ENCODE measurements at regions of chr1 and their contacts with region 1.

Region 1: DNA sequence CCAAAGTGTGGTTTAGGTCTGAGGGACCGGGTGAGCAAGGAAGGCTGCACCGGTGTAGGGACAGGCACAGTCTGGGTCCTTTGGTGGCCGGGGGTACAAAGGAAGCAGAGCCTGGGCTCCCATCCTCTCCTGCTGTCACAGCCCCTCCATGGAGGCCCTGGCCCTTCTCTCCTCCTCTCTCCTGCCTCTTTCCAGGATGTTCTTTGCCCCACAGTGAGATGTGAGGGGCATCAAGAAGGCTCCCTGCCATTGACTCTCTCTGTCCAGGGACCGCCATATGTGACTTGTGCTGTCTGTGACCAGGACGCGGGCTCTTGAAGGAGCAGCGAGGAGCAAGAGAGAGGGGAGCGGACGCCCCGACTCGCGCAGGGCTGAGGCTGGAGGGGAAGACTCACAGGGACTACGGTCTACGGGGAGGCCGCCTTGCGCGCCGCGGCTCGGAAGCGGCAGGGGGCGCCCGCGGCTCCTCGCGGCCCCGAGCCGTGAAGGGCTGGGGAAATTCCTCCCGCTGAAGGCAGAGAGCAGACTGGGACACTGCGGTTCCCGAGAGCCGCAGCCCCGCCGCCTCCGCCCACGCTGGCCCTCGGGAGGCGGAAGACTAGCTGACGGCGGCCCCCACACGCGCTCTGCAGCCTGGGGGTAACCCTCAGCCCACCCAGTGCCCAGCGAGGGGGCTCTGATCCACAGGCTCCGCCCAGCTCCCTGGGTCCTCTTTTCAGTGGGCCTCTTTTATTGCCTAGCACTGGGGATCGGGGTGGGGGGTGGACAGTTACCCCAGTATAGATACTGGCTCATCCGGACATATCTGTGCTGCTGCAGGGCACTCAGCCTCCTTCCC is 40.8 kb downstream of the MAB21L3 start:
- DNase-seq: no peak
- ATAC-seq: peak; percentile 72
- H3K4me3 ChIP-seq: peak overlapping the region; percentile 44 to 69 (median 54); a peak in 5 of 6 replicates
- H3K27ac ChIP-seq: peak overlapping the region; percentile 87
- H3K4me1 ChIP-seq: peaks cover 58% of the 10 kb centered on the region
- H3K27me3 ChIP-seq: peaks cover 0 to 2% of the 10 kb centered on the region in 2 experiments; a peak in 1 of 5 replicates
- CTCF ChIP-seq: peak; percentile 81
- EP300 ChIP-seq: no peak
- POLR2A ChIP-seq: 0 out of 4 replicates have a peak, but pooled peaks of 1 of the 2 experiments have one; percentile 20
- RAD21 ChIP-seq: peak; percentile 90

Region 2: DNA sequence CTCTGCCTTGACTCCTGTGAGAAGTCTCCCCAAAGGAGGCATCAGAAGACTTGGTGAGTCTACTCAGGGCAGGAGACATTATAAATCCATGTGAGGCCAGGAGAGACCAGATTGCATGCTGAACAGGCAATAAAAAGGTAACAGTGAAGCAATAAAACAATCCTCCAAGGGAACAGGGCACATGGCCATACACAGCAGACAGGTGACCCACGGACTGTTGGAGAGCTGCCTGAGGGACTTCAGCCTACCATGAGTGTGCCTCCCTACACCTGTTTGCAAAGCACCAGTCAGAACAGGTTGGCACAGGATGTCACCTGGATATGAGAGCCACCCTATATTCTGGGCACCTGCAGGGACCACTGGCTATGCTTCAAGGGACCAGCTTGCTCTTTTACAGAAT is 26.9 kb after region 1 on chr1:
- CTCF ChIA-PET with region 1: no interaction called
- POLR2A ChIA-PET with region 1: interaction called, 7 read pairs
- in situ Hi-C with region 1: no loop called
- intact Hi-C with region 1: loop called (anchors 1 kb)
- DNase-seq: no peak
- ATAC-seq: peak; percentile 31
- H3K4me3 ChIP-seq: no peak overlapping the region
- H3K27ac ChIP-seq: peak overlapping the region; percentile 57
- H3K4me1 ChIP-seq: peaks cover 93% of the 10 kb centered on the region
- H3K27me3 ChIP-seq: no peaks in the 10 kb centered on the region
- CTCF ChIP-seq: no peak
- EP300 ChIP-seq: no peak
- POLR2A ChIP-seq: no peak
- RAD21 ChIP-seq: no peak

Region 3: GRCh38 chr1:116268204-116268603 is 116.2 kb after region 1 on chr1:
- CTCF ChIA-PET with region 1: no interaction called
- POLR2A ChIA-PET with region 1: no interaction called
- in situ Hi-C with region 1: loop called (anchors 25 kb)
- intact Hi-C with region 1: no loop called
- DNase-seq: no peak
- ATAC-seq: no peak
- H3K4me3 ChIP-seq: no peak overlapping the region
- H3K27ac ChIP-seq: no peak overlapping the region
- H3K4me1 ChIP-seq: peaks cover 10% of the 10 kb centered on the region
- H3K27me3 ChIP-seq: 0 out of 5 replicates have a peak, but pooled peaks cover 0 to 9% of the 10 kb centered on the region in 2 experiments
- CTCF ChIP-seq: no peak
- EP300 ChIP-seq: no peak
- POLR2A ChIP-seq: no peak
- RAD21 ChIP-seq: no peak

Region 4: GRCh38 chr1:116377541-116378529 is 225.9 kb after region 1 on chr1:
- CTCF ChIA-PET with region 1: no interaction called
- POLR2A ChIA-PET with region 1: interaction called, 4 read pairs
- in situ Hi-C with region 1: loop called (anchors 5 kb)
- intact Hi-C with region 1: loop called (anchors 5 kb)
- DNase-seq: peak; percentile 79
- ATAC-seq: peak; percentile 21
- H3K4me3 ChIP-seq: peak overlapping the region; percentile 39 to 89 (median 84)
- H3K27ac ChIP-seq: peak overlapping the region; percentile 77
- H3K4me1 ChIP-seq: peaks cover 85% of the 10 kb centered on the region
- H3K27me3 ChIP-seq: peaks cover 0 to 3% of the 10 kb centered on the region in 2 experiments; a peak in 1 of 5 replicates
- CTCF ChIP-seq: no peak
- EP300 ChIP-seq: peak in 1 of 2 experiments; percentile 60; a peak in 2 of 4 replicates
- POLR2A ChIP-seq: peak in 1 of 2 experiments; percentile 41; a peak in 1 of 4 replicates
- RAD21 ChIP-seq: no peak

Region 5: GRCh38 chr1:116506132-116507004 is 354.4 kb after region 1 on chr1:
- CTCF ChIA-PET with region 1: no interaction called
- POLR2A ChIA-PET with region 1: no interaction called
- in situ Hi-C with region 1: no loop called
- intact Hi-C with region 1: no loop called
- DNase-seq: no peak
- ATAC-seq: no peak
- H3K4me3 ChIP-seq: no peak overlapping the region
- H3K27ac ChIP-seq: no peak overlapping the region
- H3K4me1 ChIP-seq: peaks cover 60% of the 10 kb centered on the region
- H3K27me3 ChIP-seq: no peaks in the 10 kb centered on the region
- CTCF ChIP-seq: no peak
- EP300 ChIP-seq: no peak
- POLR2A ChIP-seq: no peak
- RAD21 ChIP-seq: no peak